Common myeloid progenitor, CD34-positive (primary cell): ENCODE measurements at regions of chr20 and their contacts with region 1.

Region 1: GRCh38 chr20:354298-355064 is 7.6 kb downstream of the NRSN2 start:
- DNase-seq: peak; percentile 83 to 92 (median 88)
- H3K4me3 ChIP-seq: no peak overlapping the region
- H3K27ac ChIP-seq: no peak overlapping the region
- H3K4me1 ChIP-seq: peaks cover 0 to 2% (median 0%) of the 10 kb centered on the region in 4 experiments
- H3K27me3 ChIP-seq: no peaks in the 10 kb centered on the region

Region 2: DNA sequence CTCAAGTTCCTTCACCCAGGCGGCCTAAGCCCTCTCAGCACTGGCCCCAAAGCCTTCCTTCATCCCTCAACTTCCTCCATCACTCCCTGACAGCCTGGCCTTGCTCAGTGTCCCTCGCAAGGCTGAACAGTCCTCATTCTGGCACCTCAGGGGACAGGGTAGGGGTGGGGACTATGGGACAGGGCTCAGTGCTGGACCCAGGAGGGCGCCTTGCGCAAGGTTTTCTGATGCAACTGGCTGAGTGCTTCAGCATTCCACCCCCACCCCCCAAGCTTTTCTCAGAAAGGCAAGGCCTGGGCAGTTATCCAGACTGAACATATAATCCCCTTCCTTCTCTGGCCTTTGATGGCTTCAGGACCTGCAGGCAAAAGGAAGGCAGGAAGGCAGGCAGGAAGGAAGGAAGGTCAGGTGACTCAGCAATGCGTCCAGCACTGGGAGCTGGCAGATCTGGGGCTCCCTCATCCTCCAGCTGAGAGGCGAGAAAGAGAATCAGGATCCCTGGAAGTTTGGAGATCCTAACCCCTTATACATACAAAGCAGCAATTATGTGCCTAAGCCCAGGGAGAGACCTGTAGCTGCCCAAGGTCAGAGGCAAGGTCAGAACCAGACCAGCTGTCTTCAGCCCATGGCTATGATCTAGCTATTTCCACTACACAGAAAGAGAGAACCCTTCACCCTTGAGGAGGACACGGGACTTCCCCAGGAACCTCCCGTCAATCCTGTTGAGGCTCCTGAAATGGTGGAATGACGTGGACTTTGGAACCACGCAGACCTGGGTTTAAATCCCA is 17.5 kb after region 1 on chr20:
- CTCF ChIA-PET with region 1: interaction called, 21 read pairs
- POLR2A ChIA-PET with region 1: no interaction called
- DNase-seq: peak in 2 of 3 donors; percentile 51 to 52
- H3K4me3 ChIP-seq: peak overlapping the region in 1 of 7 experiments; percentile 37
- H3K27ac ChIP-seq: peak overlapping the region in 1 of 2 experiments; percentile 72
- H3K4me1 ChIP-seq: peaks cover 0 to 31% (median 26%) of the 10 kb centered on the region in 4 experiments
- H3K27me3 ChIP-seq: no peaks in the 10 kb centered on the region

Region 3: GRCh38 chr20:478949-479429 is 124.5 kb after region 1 on chr20:
- CTCF ChIA-PET with region 1: interaction called, 103 read pairs
- POLR2A ChIA-PET with region 1: no interaction called
- DNase-seq: peak; percentile 72 to 89 (median 82)
- H3K4me3 ChIP-seq: no peak overlapping the region
- H3K27ac ChIP-seq: no peak overlapping the region
- H3K4me1 ChIP-seq: no peaks in the 10 kb centered on the region
- H3K27me3 ChIP-seq: no peaks in the 10 kb centered on the region